Activated CD4-positive, alpha-beta T cell treated with anti-CD3 and anti-CD28 coated beads for 36 hours (primary cell): ENCODE measurements at regions of chr9 and their contacts with region 1.

Region 1: GRCh38 chr9:32579706-32580331 is 6.9 kb upstream of the NDUFB6 start:
- DNase-seq: peak; percentile 87
- ATAC-seq: no peak
- H3K4me3 Mint-ChIP-seq: no peak overlapping the region
- H3K27ac Mint-ChIP-seq: no peak overlapping the region
- H3K4me1 Mint-ChIP-seq: no peaks in the 10 kb centered on the region
- H3K27me3 Mint-ChIP-seq: peaks cover 8% of the 10 kb centered on the region

Region 2: DNA sequence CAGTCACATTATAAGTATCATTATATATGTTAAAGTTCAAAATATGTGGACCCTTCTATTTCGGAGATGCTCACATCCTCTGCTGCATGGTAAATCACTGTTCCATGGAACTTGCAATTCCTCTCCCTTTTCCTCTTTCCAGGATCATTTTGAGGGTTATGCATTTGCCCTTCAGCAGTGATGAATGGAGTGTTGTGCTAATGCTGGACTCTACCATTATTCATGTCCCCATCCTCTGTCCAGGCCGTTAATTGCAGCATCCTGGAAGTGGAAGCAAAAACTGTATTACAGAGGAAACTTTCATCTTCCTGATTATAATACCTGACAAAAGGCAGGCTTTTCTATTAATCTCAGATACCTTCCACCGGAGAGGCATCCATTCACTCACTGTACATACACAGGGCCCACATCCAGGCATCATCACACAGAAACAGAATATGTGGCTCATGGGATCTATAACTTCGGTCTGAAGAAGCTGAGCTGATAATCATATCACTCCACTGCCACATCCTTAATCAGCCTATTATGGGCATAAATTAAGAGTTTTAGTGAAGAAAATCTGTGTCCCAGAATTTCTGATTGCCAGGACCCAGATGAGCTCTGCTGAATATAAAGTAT is 260.4 kb before region 1 on chr9:
- CTCF ChIA-PET with region 1: no interaction called
- POLR2A ChIA-PET with region 1: no interaction called
- intact Hi-C with region 1: no loop called
- DNase-seq: no peak
- ATAC-seq: no peak
- H3K4me3 Mint-ChIP-seq: no peak overlapping the region
- H3K27ac Mint-ChIP-seq: no peak overlapping the region
- H3K4me1 Mint-ChIP-seq: no peaks in the 10 kb centered on the region
- H3K27me3 Mint-ChIP-seq: peaks cover 2% of the 10 kb centered on the region

Region 3: DNA sequence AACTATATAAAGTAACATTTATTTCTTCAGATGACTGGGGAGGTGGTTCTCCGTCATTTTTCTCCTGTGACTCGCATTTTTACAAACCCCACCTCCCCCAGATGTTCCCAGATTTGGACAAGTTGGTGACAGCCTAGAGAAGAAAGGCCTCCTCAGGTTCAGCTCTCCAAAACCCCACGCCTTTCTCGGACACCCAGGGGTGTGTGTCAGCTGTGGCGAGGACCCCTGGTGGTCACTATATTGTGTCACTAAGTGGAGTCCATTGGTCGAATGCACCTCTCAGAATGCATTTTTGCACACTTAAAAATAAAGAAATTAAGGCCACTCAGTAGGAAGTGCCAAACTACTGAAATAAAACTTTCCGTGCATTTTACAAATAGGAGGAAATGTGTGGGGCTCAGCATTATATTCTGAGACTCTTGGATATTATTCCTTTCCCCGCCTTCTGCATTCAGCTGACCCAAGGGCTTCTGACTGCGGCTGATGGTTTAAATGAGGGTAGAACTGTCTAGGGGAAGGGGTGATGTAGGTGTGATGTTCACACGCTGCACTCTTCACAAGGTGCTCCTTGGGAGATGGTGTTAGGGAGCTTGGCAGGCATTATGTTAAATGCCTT is 147.8 kb before region 1 on chr9:
- CTCF ChIA-PET with region 1: interaction called, 7 read pairs
- POLR2A ChIA-PET with region 1: no interaction called
- intact Hi-C with region 1: loop called in 1 of 2 experiments (anchors 5 kb)
- DNase-seq: peak; percentile 54
- ATAC-seq: no peak
- H3K4me3 Mint-ChIP-seq: no peak overlapping the region
- H3K27ac Mint-ChIP-seq: no peak overlapping the region
- H3K4me1 Mint-ChIP-seq: no peaks in the 10 kb centered on the region
- H3K27me3 Mint-ChIP-seq: no peaks in the 10 kb centered on the region

Region 4: DNA sequence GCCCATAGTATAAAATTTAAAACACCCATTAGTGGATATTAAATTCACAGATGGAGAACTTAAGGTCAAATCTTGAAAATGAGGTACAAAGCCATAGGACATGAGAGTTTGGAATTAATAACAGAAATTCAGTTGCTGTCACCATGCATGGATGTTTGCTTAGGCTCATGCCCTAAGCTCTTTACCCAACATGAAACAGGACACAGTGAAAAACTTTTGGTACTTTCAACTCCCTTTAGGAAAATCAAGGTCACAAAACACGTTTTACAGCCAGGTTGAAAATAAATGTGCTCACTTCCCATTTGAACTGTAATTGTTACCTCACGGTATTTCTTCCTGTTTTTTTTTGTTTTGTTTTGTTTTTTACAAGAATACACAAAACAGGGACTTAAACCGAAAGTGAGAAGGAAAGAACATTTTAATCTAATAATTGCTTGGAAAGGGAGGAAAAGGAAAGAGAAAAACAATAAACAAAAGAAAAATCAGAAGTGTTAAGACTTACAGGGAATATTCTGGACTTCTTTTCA is 21.3 kb before region 1 on chr9:
- CTCF ChIA-PET with region 1: interaction called, 16 read pairs
- POLR2A ChIA-PET with region 1: no interaction called
- intact Hi-C with region 1: no loop called
- DNase-seq: no peak
- ATAC-seq: no peak
- H3K4me3 Mint-ChIP-seq: no peak overlapping the region
- H3K27ac Mint-ChIP-seq: no peak overlapping the region
- H3K4me1 Mint-ChIP-seq: peaks cover 37% of the 10 kb centered on the region
- H3K27me3 Mint-ChIP-seq: no peaks in the 10 kb centered on the region

Region 5: DNA sequence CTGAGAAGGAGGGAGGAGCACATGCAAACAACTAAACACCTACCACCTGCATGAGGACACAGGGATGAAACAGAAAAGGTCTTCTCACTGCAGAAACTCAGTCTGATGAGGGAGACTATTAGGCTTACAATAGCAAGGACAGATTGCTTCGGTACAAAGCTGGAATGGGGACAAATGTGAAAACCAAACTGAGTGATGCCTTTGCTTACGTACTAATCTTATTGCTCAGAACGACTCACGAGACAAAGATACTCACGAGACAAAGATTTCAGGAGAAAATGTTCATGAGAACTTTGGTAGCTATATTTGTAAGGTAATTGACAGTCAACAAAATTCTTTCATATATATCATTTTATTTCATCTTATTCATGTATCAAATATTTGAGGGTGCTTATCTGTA is 127.5 kb after region 1 on chr9:
- CTCF ChIA-PET with region 1: no interaction called
- POLR2A ChIA-PET with region 1: no interaction called
- intact Hi-C with region 1: no loop called
- DNase-seq: no peak
- ATAC-seq: no peak
- H3K4me3 Mint-ChIP-seq: no peak overlapping the region
- H3K27ac Mint-ChIP-seq: no peak overlapping the region
- H3K4me1 Mint-ChIP-seq: no peaks in the 10 kb centered on the region
- H3K27me3 Mint-ChIP-seq: peaks cover 11% of the 10 kb centered on the region

Region 6: DNA sequence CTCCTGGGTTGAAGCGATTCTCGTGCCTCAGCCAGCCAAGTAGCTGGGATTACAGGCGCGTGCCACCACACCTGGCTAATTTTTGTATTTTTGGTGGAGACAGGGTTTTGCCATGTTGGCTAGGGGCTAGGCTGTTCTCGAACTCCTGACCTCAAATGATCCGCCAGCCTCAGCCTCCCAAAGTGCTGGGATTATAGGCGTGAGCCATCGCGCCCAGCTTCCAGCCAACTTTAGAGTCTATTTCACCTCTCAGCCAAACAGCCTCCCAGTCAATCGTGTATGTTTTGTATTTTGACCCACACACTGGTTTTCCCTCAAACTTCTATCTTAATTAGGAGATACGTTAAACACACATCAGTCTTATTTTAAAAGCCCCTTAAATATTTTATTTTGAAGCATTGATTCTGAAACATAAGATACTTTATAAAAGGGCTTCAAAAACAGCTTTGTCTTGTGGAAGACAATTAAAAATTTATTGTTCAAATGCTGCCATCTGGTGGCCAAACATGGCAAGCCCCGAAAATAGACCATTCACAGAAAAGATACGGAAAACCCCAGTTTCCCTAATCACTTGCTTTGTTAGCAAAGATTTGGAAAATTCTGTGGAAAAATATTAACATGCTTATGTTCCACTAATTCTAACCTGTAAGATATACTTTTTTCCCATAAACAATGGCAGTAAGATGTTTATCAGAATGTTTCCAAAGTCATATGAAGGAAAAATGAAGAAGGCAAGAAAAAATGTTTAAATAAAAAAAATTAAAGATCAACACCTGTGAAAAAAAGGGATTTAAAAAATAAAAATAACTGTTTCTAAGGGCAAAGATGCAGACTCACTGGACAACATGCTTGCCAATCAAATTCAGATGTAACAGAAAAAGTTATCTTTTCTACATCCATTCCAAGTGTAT is 388.5 kb after region 1 on chr9:
- CTCF ChIA-PET with region 1: interaction called, 56 read pairs
- POLR2A ChIA-PET with region 1: no interaction called
- intact Hi-C with region 1: loop called (anchors 1 to 2 kb)
- DNase-seq: peak; percentile 74
- ATAC-seq: no peak
- H3K4me3 Mint-ChIP-seq: no peak overlapping the region
- H3K27ac Mint-ChIP-seq: no peak overlapping the region
- H3K4me1 Mint-ChIP-seq: no peaks in the 10 kb centered on the region
- H3K27me3 Mint-ChIP-seq: no peaks in the 10 kb centered on the region